Mucosa of descending colon (tissue), 3 donors: ENCODE measurements at regions of chr17 and their contacts with region 1.

Region 1: GRCh38 chr17:73261952-73262675 is 434 bp upstream of the CPSF4L start:
- DNase-seq: peak; percentile 85 to 86 (median 86)
- ATAC-seq: peak; percentile 95
- H3K4me3 ChIP-seq: no peak overlapping the region
- H3K4me1 ChIP-seq: peaks cover 5% of the 10 kb centered on the region
- CTCF ChIP-seq: no peak

Region 2: GRCh38 chr17:73359987-73360410 is 97.9 kb after region 1 on chr17:
- intact Hi-C with region 1: loop called in 1 of 2 experiments (anchors 5 kb)
- DNase-seq: peak; percentile 78 to 86 (median 85)
- ATAC-seq: peak; percentile 91
- H3K4me3 ChIP-seq: no peak overlapping the region
- H3K4me1 ChIP-seq: no peaks in the 10 kb centered on the region
- CTCF ChIP-seq: no peak